Activated naive CD4-positive, alpha-beta T cell treated with anti-CD3 and anti-CD28 coated beads, Interleukin-2, amount 10 ng/mL, durations not matched to agents 7 days and 5 days (primary cell): ENCODE measurements at regions of chr2 and their contacts with region 1.

Region 1: GRCh38 chr2:44479122-44479887 is 117.6 kb downstream of the CAMKMT start:
- DNase-seq: peak; percentile 48
- H3K4me3 Mint-ChIP-seq: no peak overlapping the region
- H3K27ac Mint-ChIP-seq: no peak overlapping the region
- H3K4me1 Mint-ChIP-seq: peaks cover 3% of the 10 kb centered on the region
- H3K27me3 Mint-ChIP-seq: no peaks in the 10 kb centered on the region

Region 2: GRCh38 chr2:44044281-44044720 is 435.0 kb before region 1 on chr2:
- CTCF ChIA-PET with region 1: interaction called, 10 read pairs
- DNase-seq: peak; percentile 87
- H3K4me3 Mint-ChIP-seq: no peak overlapping the region
- H3K27ac Mint-ChIP-seq: no peak overlapping the region
- H3K4me1 Mint-ChIP-seq: no peaks in the 10 kb centered on the region
- H3K27me3 Mint-ChIP-seq: peaks cover 14% of the 10 kb centered on the region

Region 3: DNA sequence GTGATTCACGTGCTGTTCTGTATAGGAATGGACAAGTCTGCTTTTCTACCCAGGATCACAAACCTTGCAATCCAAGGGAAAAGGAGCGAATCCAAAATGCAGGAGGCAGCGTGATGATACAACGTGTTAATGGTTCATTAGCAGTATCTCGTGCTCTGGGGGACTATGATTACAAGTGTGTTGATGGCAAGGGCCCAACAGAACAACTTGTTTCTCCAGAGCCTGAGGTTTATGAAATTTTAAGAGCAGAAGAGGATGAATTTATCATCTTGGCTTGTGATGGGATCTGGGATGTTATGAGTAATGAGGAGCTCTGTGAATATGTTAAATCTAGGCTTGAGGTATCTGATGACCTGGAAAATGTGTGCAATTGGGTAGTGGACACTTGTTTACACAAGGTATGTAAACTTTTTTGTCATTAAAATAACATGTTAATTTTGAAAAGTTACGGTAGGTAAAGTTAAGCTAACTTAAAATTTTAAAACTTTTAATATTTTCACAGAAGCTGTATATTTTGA is 277.6 kb before region 1 on chr2:
- CTCF ChIA-PET with region 1: no interaction called
- DNase-seq: no peak
- H3K4me3 Mint-ChIP-seq: no peak overlapping the region
- H3K27ac Mint-ChIP-seq: no peak overlapping the region
- H3K4me1 Mint-ChIP-seq: peaks cover 14% of the 10 kb centered on the region
- H3K27me3 Mint-ChIP-seq: no peaks in the 10 kb centered on the region

Region 4: DNA sequence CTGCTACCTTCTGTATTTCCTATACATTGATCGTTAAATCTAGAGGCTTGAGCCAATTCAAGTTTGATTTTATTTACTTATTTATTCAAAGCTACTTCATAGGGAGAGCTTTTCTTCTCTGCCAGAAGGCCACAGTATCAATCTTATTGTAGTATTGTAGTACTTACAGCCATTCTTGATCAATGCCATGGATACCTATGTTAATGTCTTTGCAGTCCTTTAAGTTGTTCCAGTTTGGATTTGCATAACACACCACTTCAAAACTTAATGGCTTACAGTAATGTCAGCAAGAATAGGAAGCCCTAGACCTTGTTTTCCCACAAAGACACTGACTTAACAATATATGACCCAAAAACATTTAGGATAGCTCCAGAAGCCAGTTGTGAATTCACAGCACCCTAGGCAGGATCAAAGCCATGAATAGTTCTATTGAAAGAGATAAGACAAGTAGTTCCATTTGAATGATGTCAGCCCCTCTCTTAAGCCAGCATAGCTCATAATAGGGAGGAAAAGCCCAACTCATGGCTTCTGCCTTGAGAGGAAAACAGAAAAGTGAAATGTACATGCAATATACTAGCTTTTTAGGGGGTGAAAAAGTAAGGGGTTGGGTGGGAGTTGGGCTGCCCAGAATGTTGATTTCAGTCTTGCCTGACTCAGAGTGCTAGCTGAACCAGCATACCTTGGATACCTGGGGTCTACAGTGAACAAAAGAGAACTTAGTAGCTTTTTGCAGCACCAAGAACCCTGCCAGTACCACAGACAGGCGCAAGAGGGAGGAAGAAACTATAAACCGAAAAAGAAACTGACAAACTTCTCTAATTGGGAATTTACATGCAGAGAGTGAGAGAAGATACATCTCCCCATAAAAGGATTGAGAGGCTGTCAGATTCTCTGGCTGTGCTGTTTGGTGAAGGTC is 16.1 kb before region 1 on chr2:
- CTCF ChIA-PET with region 1: interaction called, 13 read pairs
- DNase-seq: no peak
- H3K4me3 Mint-ChIP-seq: no peak overlapping the region
- H3K27ac Mint-ChIP-seq: no peak overlapping the region
- H3K4me1 Mint-ChIP-seq: no peaks in the 10 kb centered on the region
- H3K27me3 Mint-ChIP-seq: no peaks in the 10 kb centered on the region

Region 5: DNA sequence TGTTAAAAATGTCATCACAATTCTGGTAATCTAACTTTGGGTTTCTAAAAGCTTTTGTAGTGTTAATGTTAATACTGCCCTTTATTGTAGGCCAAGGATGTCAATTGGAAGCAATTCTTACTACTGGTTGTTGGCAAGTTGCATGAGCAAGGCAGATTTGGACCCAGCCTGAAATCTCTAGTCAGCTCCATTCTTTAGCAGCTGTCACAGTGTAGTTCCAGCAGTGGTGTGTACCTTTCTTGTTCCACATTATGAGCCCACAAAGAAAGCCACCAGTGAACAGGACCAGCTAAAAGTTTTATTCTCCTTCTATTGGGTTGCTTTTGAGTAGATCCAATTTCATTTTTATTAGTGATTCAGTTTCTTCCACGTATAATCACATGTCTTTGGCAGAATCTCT is 16.2 kb after region 1 on chr2:
- CTCF ChIA-PET with region 1: interaction called, 10 read pairs
- DNase-seq: no peak
- H3K4me3 Mint-ChIP-seq: no peak overlapping the region
- H3K27ac Mint-ChIP-seq: no peak overlapping the region
- H3K4me1 Mint-ChIP-seq: no peaks in the 10 kb centered on the region
- H3K27me3 Mint-ChIP-seq: no peaks in the 10 kb centered on the region

Region 6: GRCh38 chr2:44740678-44741077 is 261.4 kb after region 1 on chr2:
- CTCF ChIA-PET with region 1: no interaction called
- DNase-seq: no peak
- H3K4me3 Mint-ChIP-seq: no peak overlapping the region
- H3K27ac Mint-ChIP-seq: no peak overlapping the region
- H3K4me1 Mint-ChIP-seq: no peaks in the 10 kb centered on the region
- H3K27me3 Mint-ChIP-seq: no peaks in the 10 kb centered on the region

Region 7: DNA sequence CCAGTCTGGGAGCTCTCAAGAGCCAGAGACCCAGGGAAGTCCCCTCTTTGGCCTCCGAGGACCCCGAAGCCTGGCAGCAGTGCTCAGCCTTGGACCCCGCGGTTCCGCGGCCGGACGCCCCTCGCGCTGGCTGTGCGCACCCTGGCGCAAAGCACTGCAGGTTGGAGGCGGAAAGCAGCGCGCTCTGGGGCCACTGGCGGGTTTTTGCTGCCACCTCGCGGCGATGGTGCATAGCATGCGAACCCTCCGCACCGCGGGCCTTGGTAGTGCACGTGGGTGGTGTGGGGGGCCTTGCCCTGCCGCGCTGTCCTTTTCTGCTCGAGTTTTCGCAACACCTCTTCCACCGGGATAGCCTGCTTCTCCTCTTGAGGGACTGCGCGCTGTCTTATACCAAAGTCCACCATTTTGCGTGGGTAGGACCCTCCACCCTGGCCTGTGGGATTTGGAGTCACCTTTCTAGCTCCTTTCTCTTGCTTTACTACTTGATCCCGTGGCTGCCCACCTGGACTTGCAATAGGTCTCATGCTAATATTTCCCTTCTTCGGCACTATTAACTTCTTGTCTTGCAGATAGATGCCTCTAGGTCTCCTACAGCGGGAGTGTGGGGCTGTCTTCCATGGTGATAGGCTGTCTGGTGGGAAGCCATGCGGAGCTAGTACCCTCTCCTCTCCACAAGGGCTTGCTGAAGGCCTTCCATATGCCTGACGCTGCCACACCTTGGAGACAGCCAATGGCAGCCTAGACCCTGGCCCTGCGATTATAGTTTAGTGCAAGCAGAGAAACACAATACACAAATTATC is 476.5 kb after region 1 on chr2:
- CTCF ChIA-PET with region 1: interaction called, 67 read pairs
- DNase-seq: peak; percentile 83
- H3K4me3 Mint-ChIP-seq: no peak overlapping the region
- H3K27ac Mint-ChIP-seq: no peak overlapping the region
- H3K4me1 Mint-ChIP-seq: peaks cover 20% of the 10 kb centered on the region
- H3K27me3 Mint-ChIP-seq: peaks cover 80% of the 10 kb centered on the region